Activated B cell treated with CpG ODN at 0.5 μM for 24 hours (primary cell): ENCODE measurements at regions of chr16 and their contacts with region 1.

Region 1: GRCh38 chr16:68040507-68041288 is 17.6 kb downstream of the DUS2 start:
- DNase-seq: peak; percentile 82
- ATAC-seq: peak; percentile 77
- H3K4me3 Mint-ChIP-seq: peak overlapping the region; percentile 77
- H3K27ac Mint-ChIP-seq: peak overlapping the region; percentile 86
- H3K4me1 Mint-ChIP-seq: peaks cover 63% of the 10 kb centered on the region
- H3K27me3 Mint-ChIP-seq: no peaks in the 10 kb centered on the region
- CTCF ChIP-seq: peak; percentile 73

Region 2: DNA sequence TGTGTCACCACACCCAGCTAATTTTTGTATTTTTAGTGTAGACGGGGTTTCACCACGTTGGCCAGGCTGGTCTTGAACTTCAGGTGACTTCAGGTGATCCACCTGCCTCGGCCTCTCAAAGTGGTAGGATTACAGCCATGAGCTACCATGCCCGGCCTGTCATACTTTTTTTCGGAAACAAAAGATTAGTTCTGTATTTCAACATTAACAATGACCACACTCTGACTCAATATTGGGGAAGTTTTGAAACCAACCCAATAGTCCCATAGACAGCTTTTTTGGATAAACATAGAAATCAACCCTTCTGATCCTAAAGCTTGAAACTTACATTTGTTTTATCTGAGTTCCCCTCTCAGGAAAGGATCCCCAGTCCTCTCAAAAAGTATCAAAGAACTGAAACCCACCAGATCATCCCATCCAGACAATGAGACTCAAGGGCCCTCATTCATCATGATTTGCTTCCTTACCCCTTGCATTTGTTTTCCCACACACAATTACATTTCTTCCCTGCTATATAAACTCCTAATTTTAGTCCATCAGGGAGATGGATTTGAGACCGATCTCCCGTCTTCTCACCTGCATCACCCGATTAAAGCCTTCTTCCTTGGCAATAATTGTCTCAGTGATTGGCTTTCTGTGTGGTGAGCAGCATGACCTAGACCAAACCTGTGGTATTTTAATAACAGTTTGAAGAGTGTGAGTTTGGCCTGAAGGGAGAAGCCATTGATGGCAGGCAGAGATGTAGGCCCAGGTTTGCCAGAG is 550.2 kb before region 1 on chr16:
- CTCF ChIA-PET with region 1: interaction called, 3 read pairs
- POLR2A ChIA-PET with region 1: no interaction called
- intact Hi-C with region 1: loop called (anchors 5 kb)
- DNase-seq: no peak
- ATAC-seq: no peak
- H3K4me3 Mint-ChIP-seq: peak overlapping the region; percentile 61
- H3K27ac Mint-ChIP-seq: peak overlapping the region; percentile 89
- H3K4me1 Mint-ChIP-seq: peaks cover 77% of the 10 kb centered on the region
- H3K27me3 Mint-ChIP-seq: no peaks in the 10 kb centered on the region
- CTCF ChIP-seq: no peak

Region 3: GRCh38 chr16:67883872-67884261 is 156.8 kb before region 1 on chr16:
- CTCF ChIA-PET with region 1: interaction called, 79 read pairs
- POLR2A ChIA-PET with region 1: interaction called, 14 read pairs
- intact Hi-C with region 1: loop called (anchors 1 kb)
- DNase-seq: peak; percentile 75
- ATAC-seq: peak; percentile 90
- H3K4me3 Mint-ChIP-seq: no peak overlapping the region
- H3K27ac Mint-ChIP-seq: no peak overlapping the region
- H3K4me1 Mint-ChIP-seq: no peaks in the 10 kb centered on the region
- H3K27me3 Mint-ChIP-seq: no peaks in the 10 kb centered on the region
- CTCF ChIP-seq: peak; percentile 63

Region 4: DNA sequence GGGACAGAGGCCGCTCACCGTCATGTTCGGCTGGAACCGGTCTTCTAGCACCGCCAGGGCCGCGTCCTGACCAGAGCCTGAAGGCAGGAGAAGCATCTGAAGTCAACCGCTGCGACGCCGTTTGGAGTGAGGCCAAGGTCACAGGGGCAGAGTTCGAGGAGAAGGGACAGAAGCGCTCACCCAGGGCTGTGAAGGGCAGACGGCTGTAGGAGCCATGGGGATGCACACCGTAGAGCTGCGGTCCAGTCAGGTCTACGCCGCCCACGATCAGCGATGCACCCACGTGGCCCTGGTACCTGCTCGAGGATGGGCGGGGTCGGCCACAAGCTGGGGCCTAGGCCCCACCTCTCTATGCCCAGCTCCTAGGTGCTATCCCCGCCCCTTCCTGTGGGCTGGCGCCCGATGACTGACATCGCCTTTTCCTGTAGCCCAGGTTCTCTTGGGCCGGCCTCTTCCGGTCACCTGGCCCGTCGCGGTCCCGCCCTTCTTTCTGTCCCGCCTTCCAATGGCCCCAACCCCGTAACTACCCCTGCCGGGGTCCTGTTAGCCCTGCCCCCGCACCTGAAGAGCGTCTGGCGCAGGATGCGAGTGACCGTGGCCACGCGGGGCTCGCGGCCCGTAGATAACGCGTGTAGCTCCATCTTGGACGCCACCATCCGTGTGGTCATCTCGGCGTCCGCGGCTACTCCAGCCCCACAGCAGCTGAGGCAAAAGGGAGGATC is 105.1 kb before region 1 on chr16:
- CTCF ChIA-PET with region 1: interaction called, 28 read pairs
- POLR2A ChIA-PET with region 1: interaction called, 17 read pairs
- intact Hi-C with region 1: loop called (anchors 1 kb)
- DNase-seq: peak; percentile 85
- ATAC-seq: peak; percentile 89
- H3K4me3 Mint-ChIP-seq: peak overlapping the region; percentile 99
- H3K27ac Mint-ChIP-seq: peak overlapping the region; percentile 98
- H3K4me1 Mint-ChIP-seq: peaks cover 31% of the 10 kb centered on the region
- H3K27me3 Mint-ChIP-seq: no peaks in the 10 kb centered on the region
- CTCF ChIP-seq: no peak

Region 5: GRCh38 chr16:67993189-67994039 is 47.3 kb before region 1 on chr16:
- CTCF ChIA-PET with region 1: interaction called, 28 read pairs
- POLR2A ChIA-PET with region 1: interaction called, 17 read pairs
- intact Hi-C with region 1: loop called (anchors 1 kb)
- DNase-seq: peak; percentile 88
- ATAC-seq: peak; percentile 77
- H3K4me3 Mint-ChIP-seq: peak overlapping the region; percentile 77
- H3K27ac Mint-ChIP-seq: peak overlapping the region; percentile 98
- H3K4me1 Mint-ChIP-seq: peaks cover 78% of the 10 kb centered on the region
- H3K27me3 Mint-ChIP-seq: no peaks in the 10 kb centered on the region
- CTCF ChIP-seq: peak; percentile 47

Region 6: GRCh38 chr16:68074850-68075555 is 34.3 kb after region 1 on chr16:
- CTCF ChIA-PET with region 1: interaction called, 8 read pairs
- POLR2A ChIA-PET with region 1: interaction called, 3 read pairs
- intact Hi-C with region 1: loop called (anchors 2 kb)
- DNase-seq: peak; percentile 76
- ATAC-seq: peak; percentile 90
- H3K4me3 Mint-ChIP-seq: peak overlapping the region; percentile 81
- H3K27ac Mint-ChIP-seq: peak overlapping the region; percentile 96
- H3K4me1 Mint-ChIP-seq: peaks cover 88% of the 10 kb centered on the region
- H3K27me3 Mint-ChIP-seq: no peaks in the 10 kb centered on the region
- CTCF ChIP-seq: no peak